A673 (cell line): ENCODE measurements at regions of chr19 and their contacts with region 1.

Region 1: DNA sequence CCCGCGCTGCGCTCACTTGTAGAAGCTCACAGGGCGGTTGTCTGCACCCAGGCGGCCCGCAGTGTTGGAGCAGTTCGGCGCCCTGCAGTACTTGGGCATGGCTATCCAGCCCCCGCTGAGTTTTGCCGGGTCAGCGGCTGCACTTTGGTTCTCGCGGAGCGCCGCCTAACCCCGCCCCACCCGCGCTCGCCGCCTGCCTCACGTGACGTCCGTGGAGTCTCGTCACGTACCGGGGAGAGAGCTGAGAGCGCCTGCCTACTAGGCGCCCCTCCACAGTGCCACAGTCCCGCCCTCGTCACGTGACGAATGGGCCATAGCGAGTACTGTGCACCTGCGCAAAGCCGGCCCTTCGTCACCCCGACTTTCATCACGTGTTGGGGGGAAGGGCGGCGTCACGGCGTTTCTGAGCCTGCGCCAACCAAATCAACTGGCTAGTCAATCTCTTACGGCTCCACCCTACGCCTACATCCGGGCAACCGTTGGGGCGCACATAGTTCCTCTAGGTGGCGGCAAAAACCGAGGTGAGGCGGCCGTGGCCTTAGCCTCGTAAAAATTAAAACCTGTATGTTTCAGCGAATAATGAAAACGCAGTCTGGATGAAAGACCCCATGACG is at the start of gene THAP8:
- DNase-seq: peak; percentile 100
- H3K4me3 ChIP-seq: peak within 1 kb of the TSS; percentile 85
- H3K27ac ChIP-seq: peak within 1 kb of the TSS; percentile 93
- H3K4me1 ChIP-seq: peaks cover 5% of the 10 kb centered on the region
- H3K27me3 ChIP-seq: no peaks in the 10 kb centered on the region
- CTCF ChIP-seq: peak; percentile 60
- total RNA-seq, gene THAP8: 4.6 and 5.4 TPM in 2 replicates

Region 2: DNA sequence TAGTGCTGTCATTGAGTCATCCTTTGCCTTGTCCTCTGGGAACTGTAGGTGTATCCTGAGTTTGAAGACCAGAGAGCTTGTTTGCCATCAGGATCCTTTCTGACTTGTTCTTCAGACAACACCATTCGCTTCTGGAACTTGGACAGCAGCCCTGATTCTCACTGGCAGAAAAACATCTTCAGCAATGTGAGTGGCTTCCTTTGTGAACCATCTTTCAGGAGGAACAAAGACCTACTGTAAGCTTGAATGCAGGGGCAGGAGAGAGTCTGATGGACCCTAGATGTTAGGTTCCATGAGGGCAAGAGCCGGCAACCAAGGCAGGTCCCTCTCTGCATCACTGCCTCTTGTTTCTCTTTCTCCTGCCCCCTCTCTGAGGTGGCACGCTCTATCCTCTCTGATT is 27.2 kb after region 1 on chr19:
- CTCF ChIA-PET with region 1: no interaction called
- POLR2A ChIA-PET with region 1: no interaction called
- intact Hi-C with region 1: no loop called
- DNase-seq: no peak
- H3K4me3 ChIP-seq: no peak overlapping the region
- H3K27ac ChIP-seq: no peak overlapping the region
- H3K4me1 ChIP-seq: no peaks in the 10 kb centered on the region
- H3K27me3 ChIP-seq: no peaks in the 10 kb centered on the region
- CTCF ChIP-seq: no peak

Region 3: GRCh38 chr19:36114763-36115452 is 60.7 kb after region 1 on chr19 and contains the start of gene POLR2I:
- CTCF ChIA-PET with region 1: no interaction called
- POLR2A ChIA-PET with region 1: interaction called, 3 read pairs
- intact Hi-C with region 1: loop called (anchors 2 kb)
- DNase-seq: peak; percentile 100
- H3K4me3 ChIP-seq: peak within 1 kb of the TSS; percentile 60
- H3K27ac ChIP-seq: peak within 1 kb of the TSS; percentile 78
- H3K4me1 ChIP-seq: peaks cover 13% of the 10 kb centered on the region
- H3K27me3 ChIP-seq: no peaks in the 10 kb centered on the region
- CTCF ChIP-seq: no peak
- total RNA-seq, gene POLR2I: 133 and 142 TPM in 2 replicates